GM12878 (cell line): ENCODE measurements at regions of chr11 and their contacts with region 1.

Region 1: DNA sequence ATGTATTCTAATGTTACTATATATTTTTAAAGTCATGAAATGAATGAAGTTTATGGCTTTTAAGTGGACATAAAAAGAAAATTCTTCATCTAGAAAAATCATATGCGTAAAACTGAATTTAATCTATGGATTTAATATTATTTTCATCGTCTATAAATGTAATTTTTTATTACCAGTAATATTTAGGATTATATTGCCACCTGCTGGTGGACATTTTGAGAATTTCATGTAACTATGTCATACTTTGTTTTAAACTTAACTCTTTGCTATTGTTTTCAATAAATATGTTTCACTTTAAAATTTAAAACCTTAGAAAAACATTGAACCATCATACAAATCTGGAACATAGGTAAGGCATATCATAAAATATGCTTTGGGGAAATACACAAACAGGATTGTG is 66.5 kb upstream of the CEP126 start:
- DNase-seq: no peak
- ATAC-seq: no peak
- H3K4me3 ChIP-seq: no peak overlapping the region
- H3K27ac ChIP-seq: no peak overlapping the region
- H3K4me1 ChIP-seq: no peaks in the 10 kb centered on the region
- H3K27me3 ChIP-seq: no peaks in the 10 kb centered on the region; a peak in 1 of 4 replicates
- CTCF ChIP-seq: peak in 1 of 3 experiments; percentile 5; a peak in 2 of 6 replicates
- EP300 ChIP-seq: no peak
- POLR2A ChIP-seq: no peak
- RAD21 ChIP-seq: no peak

Region 2: DNA sequence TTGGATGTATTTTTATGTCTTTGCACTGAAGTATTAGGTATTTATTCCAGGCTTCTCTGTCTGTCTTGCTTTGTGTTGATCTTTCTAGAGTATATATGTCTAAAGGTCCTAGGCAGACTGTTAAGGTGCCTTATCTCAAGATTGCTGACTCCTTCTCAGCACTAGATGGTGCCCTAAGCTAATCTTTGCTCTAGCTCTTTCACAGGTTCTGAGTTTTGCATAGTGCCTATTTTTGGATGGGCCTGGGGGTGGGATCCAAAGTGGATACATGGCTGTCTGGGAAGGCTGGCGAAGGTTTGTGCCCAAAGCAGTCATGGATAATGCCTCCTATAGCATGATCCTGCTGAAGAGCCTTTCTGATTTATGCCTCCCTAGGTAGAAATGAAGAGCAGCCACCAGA is 419.3 kb before region 1 on chr11:
- CTCF ChIA-PET with region 1: interaction called, 6 read pairs
- POLR2A ChIA-PET with region 1: no interaction called
- RAD21 ChIA-PET with region 1: interaction called, 4 read pairs
- SMC1A ChIA-PET with region 1: no interaction called
- in situ Hi-C with region 1: no loop called
- intact Hi-C with region 1: loop called (anchors 1 kb)
- DNase-seq: no peak
- ATAC-seq: peak; percentile 85
- H3K4me3 ChIP-seq: no peak overlapping the region
- H3K27ac ChIP-seq: no peak overlapping the region
- H3K4me1 ChIP-seq: no peaks in the 10 kb centered on the region
- H3K27me3 ChIP-seq: no peaks in the 10 kb centered on the region
- CTCF ChIP-seq: peak; percentile 38 to 45 (median 39); a peak in 5 of 6 replicates
- EP300 ChIP-seq: no peak
- POLR2A ChIP-seq: no peak
- RAD21 ChIP-seq: peak; percentile 66

Region 3: DNA sequence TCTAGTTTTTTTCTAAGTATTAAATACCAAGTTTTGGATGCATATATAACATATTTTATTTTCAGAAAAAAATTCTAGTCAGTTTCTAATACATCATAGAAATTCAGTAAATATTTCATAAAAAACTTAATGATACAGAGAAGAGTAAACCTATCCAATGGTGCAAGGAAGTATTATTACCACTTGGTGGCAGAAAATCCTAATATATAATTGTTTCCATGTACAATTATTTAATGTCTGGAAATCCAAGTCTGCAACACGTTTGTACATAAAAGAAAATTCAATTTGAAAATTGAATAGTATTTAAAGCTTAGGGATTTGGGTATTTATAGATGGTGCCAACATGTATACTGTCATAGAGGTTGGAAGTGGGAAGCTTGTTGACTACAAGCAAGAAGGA is 391.4 kb before region 1 on chr11:
- CTCF ChIA-PET with region 1: interaction called, 14 read pairs
- POLR2A ChIA-PET with region 1: no interaction called
- RAD21 ChIA-PET with region 1: interaction called, 4 read pairs
- SMC1A ChIA-PET with region 1: no interaction called
- in situ Hi-C with region 1: loop called (anchors 10 kb)
- intact Hi-C with region 1: loop called (anchors 2 kb)
- DNase-seq: no peak
- ATAC-seq: no peak
- H3K4me3 ChIP-seq: no peak overlapping the region
- H3K27ac ChIP-seq: no peak overlapping the region
- H3K4me1 ChIP-seq: no peaks in the 10 kb centered on the region
- H3K27me3 ChIP-seq: no peaks in the 10 kb centered on the region
- CTCF ChIP-seq: no peak; a peak in 1 of 6 replicates
- EP300 ChIP-seq: no peak
- POLR2A ChIP-seq: no peak
- RAD21 ChIP-seq: peak; percentile 42; the same call in 1 of the 2 replicates

Region 4: DNA sequence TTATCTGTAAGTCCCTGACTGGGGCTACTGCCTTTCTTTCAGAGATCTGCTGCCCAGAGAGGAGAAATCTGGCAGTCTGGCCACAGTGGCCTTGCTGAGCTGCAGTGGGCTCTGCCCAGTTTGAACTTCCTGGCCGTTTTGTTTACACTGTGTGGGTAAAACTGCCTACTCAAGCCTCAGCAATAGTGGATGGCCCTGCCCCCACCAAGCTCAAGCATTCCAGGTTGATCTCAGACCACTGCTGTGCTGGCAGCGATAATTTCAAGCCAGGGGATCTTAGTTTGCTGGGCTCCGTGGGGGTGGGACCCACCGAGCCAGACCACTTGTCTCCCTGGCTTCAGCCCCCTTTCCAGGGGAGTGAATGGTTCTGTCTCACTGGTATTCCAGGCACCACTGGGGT is 381.9 kb before region 1 on chr11:
- CTCF ChIA-PET with region 1: no interaction called
- POLR2A ChIA-PET with region 1: no interaction called
- RAD21 ChIA-PET with region 1: no interaction called
- SMC1A ChIA-PET with region 1: no interaction called
- in situ Hi-C with region 1: loop called (anchors 10 kb)
- intact Hi-C with region 1: no loop called
- DNase-seq: no peak
- ATAC-seq: no peak
- H3K4me3 ChIP-seq: no peak overlapping the region
- H3K27ac ChIP-seq: no peak overlapping the region
- H3K4me1 ChIP-seq: no peaks in the 10 kb centered on the region
- H3K27me3 ChIP-seq: no peaks in the 10 kb centered on the region; a peak in 1 of 4 replicates
- CTCF ChIP-seq: no peak
- EP300 ChIP-seq: no peak
- POLR2A ChIP-seq: no peak
- RAD21 ChIP-seq: no peak

Region 5: GRCh38 chr11:101860696-101861427 is 12.6 kb after region 1 on chr11:
- CTCF ChIA-PET with region 1: interaction called, 17 read pairs
- POLR2A ChIA-PET with region 1: no interaction called
- RAD21 ChIA-PET with region 1: interaction called, 3 read pairs
- SMC1A ChIA-PET with region 1: interaction called, 4 read pairs
- in situ Hi-C with region 1: no loop called
- intact Hi-C with region 1: no loop called
- DNase-seq: no peak
- ATAC-seq: peak; percentile 91
- H3K4me3 ChIP-seq: no peak overlapping the region
- H3K27ac ChIP-seq: no peak overlapping the region
- H3K4me1 ChIP-seq: no peaks in the 10 kb centered on the region
- H3K27me3 ChIP-seq: no peaks in the 10 kb centered on the region; a peak in 1 of 4 replicates
- CTCF ChIP-seq: peak; percentile 61 to 72 (median 65)
- EP300 ChIP-seq: no peak
- POLR2A ChIP-seq: no peak
- RAD21 ChIP-seq: peak; percentile 57